Colonic mucosa (tissue), 4 donors: ENCODE measurements at regions of chr12 and their contacts with region 1.

Region 1: GRCh38 chr12:92145731-92146496 is at the start of gene BTG1:
- DNase-seq: peak; percentile 99
- H3K4me3 ChIP-seq: peak within 1 kb of the TSS; percentile 82
- H3K27ac ChIP-seq: peak within 1 kb of the TSS; percentile 99
- H3K4me1 ChIP-seq: no peaks in the 10 kb centered on the region
- H3K27me3 ChIP-seq: no peaks in the 10 kb centered on the region
- CTCF ChIP-seq: no peak
- total RNA-seq, gene BTG1: 87.1 to 152 TPM

Region 2: GRCh38 chr12:91811481-91812287 is 334.2 kb before region 1 on chr12:
- intact Hi-C with region 1: loop called (anchors 5 kb)
- DNase-seq: peak; percentile 87
- H3K4me3 ChIP-seq: no peak overlapping the region
- H3K27ac ChIP-seq: no peak overlapping the region
- H3K4me1 ChIP-seq: no peaks in the 10 kb centered on the region
- H3K27me3 ChIP-seq: no peaks in the 10 kb centered on the region
- CTCF ChIP-seq: peak; percentile 78

Region 3: DNA sequence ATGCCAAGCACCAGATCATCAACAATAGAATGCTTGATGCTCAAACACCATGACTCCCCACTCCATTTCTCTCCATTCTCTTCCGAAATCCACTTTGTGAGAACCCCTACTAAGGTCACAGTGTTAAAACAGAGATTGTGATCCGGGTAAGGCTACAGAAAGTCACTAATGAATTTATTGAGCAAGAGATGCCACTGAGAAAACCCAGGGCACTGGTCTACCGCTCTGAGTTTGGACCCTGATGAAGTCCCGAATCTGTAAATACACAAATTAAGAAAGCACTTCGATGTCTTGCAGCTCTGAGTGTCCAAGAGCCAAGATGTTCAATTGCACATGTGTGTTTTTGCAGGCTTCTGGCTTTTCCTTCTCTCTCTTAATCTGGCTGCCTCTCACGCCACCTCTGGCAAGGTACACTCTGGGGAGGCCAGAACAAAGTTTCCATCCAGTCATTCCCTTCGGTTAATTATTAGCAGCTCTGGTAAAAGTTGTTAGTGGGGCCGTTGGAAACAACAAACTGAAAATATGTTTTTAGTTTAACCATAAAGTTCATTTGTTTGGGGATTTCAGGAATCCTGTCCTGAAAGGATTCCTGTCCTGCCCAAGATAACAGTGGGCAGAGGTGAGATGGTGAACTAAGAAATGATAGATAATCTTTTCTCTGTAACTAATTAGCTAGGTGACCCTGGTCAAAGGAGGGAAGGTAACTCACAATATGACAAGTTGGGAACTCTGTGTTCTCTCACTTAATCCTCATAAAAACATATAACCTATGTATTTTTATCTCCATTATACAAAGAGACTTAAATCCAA is 75.7 kb before region 1 on chr12:
- intact Hi-C with region 1: loop called (anchors 5 kb)
- DNase-seq: peak; percentile 74
- H3K4me3 ChIP-seq: no peak overlapping the region
- H3K27ac ChIP-seq: peak overlapping the region; percentile 72
- H3K4me1 ChIP-seq: peaks cover 6% of the 10 kb centered on the region
- H3K27me3 ChIP-seq: no peaks in the 10 kb centered on the region
- CTCF ChIP-seq: no peak

Region 4: GRCh38 chr12:92561543-92561899 is 415.6 kb after region 1 on chr12:
- intact Hi-C with region 1: loop called (anchors 5 kb)
- DNase-seq: peak; percentile 40
- H3K4me3 ChIP-seq: no peak overlapping the region
- H3K27ac ChIP-seq: no peak overlapping the region
- H3K4me1 ChIP-seq: no peaks in the 10 kb centered on the region
- H3K27me3 ChIP-seq: no peaks in the 10 kb centered on the region
- CTCF ChIP-seq: no peak